MCF 10A (cell line): ENCODE measurements at regions of chrX and their contacts with region 1.

Region 1: DNA sequence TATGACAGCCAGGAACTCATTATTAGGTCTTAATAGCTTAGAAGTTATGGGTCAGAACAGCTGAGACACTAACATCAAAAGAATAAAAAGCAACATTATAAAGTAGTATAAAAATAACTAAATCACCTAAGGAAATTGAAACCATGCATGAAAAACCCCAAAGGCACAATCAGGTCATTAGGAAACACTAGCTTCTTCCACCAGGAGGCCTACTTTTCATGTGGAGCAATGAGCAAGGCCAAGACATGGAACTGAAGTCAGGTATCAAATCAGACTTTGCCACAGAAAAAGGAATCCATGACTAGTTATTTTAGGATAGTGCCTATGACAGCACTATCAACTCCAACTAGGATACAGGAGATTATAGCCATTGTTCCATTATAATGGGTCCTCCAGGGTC is 7.9 kb downstream of the HUWE1 start:
- DNase-seq: peak; percentile 40
- H3K4me3 Mint-ChIP-seq: no peak overlapping the region
- H3K27ac Mint-ChIP-seq: no peak overlapping the region
- H3K4me1 Mint-ChIP-seq: peaks cover 6% of the 10 kb centered on the region
- H3K27me3 Mint-ChIP-seq: peaks cover 74% of the 10 kb centered on the region
- CTCF ChIP-seq: no peak

Region 2: DNA sequence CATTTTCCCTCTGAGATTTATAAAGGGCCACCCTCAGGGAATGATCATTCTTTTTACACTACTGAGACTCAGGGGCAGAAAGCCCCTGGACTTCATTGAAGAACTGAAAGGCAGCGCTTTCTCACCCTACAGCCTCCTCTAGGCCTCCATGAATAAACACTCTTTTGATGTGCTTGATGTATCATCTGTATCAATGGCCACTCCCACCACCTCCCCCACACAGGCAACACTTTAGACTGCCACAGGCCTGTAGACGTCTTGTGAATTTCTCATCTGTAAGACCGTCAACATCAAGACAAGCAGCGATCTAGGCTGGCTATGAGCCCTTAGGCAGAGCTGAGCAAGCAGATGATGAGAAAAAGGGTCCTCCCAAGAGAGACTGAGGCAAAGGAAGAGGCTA is 115.3 kb before region 1 on chrX:
- CTCF ChIA-PET with region 1: no interaction called
- POLR2A ChIA-PET with region 1: no interaction called
- intact Hi-C with region 1: no loop called
- DNase-seq: no peak
- H3K4me3 Mint-ChIP-seq: no peak overlapping the region
- H3K27ac Mint-ChIP-seq: no peak overlapping the region
- H3K4me1 Mint-ChIP-seq: no peaks in the 10 kb centered on the region
- H3K27me3 Mint-ChIP-seq: peaks cover 77% of the 10 kb centered on the region
- CTCF ChIP-seq: no peak

Region 3: DNA sequence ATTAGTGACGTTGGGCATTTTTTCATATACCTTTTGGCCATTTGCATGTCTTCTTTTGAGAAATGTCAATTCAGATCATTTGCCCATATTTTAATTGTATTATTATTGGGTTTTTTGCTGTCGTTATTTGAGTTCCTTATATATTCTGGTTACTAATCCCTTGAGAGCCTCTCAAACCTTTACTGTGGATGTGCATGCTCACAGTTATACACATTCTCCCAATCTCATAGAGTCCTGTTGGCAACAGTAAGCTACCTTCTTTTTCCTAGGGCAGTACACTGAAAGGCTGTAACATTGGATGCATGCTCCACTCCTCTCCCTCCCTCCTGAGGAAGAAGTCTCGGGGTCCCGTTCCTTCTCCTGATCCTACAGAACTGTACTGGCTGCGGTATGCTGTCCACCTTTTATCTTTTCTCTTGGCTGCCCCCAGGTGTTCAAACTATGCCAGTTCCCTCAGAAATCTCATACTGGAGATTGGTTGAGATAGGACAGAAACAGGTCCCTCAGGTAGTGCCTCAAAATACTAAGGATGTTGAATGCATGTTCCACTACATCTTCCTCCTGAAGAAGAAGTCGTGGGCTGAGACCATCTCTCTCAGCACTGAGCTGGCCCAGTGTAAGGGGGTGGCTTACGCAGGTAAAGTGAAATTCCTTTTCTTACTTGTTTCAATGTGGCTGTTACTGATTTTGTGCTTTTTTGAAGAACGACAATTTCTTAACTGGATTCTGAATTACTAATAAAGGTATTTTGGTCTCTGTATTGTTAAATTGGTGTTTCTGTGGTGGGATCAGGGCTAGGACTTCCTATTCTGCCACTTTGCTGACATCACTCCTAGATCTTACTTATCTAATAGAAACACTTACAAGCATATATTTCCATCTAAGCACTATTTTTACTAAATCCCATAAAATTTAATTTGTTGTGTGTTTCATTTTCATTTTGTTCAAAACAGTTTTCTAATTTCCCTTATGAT is 153.3 kb after region 1 on chrX:
- CTCF ChIA-PET with region 1: interaction called, 4 read pairs
- POLR2A ChIA-PET with region 1: interaction called, 4 read pairs
- intact Hi-C with region 1: loop called (anchors 2 kb)
- DNase-seq: peak; percentile 66
- H3K4me3 Mint-ChIP-seq: no peak overlapping the region
- H3K27ac Mint-ChIP-seq: no peak overlapping the region
- H3K4me1 Mint-ChIP-seq: no peaks in the 10 kb centered on the region
- H3K27me3 Mint-ChIP-seq: peaks cover 33% of the 10 kb centered on the region
- CTCF ChIP-seq: peak; percentile 64